ENCODE measurements at regions of chr3 and their contacts with region 1.

Region 1: DNA sequence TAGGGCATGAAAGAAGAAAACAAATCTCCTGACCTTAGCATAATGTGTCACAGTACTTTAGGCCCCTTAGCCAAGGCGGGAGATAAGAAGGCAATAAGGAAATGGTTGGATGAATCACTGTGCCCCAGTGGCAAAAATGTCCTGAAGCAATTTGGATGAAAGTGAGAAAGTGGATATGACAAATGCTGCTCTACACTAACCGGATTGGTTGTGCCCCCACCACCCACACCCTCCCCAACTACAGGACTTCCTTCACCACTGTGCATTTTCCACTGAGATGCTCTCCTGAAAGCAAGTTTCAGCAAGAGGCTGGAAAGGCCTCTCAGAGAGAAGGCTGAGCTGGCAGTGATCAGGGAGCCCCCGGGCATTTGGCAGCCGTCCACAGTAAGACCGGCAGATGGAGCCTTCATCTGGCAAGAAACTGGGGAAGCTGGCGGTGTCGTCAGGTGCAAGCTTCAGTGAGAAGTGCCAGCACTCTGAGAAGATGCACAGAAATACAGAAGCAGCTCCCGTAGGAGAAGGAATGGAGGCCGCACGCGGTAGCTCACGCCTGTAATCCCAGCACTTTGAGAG is 63.8 kb downstream of the ATP1B3 start:
- DNase-seq: no peak
- H3K4me3 Mint-ChIP-seq: peak overlapping the region; percentile 51
- H3K27ac Mint-ChIP-seq: peak overlapping the region; percentile 81
- H3K4me1 Mint-ChIP-seq: peaks cover 22% of the 10 kb centered on the region
- H3K27me3 Mint-ChIP-seq: no peaks in the 10 kb centered on the region

Region 2: DNA sequence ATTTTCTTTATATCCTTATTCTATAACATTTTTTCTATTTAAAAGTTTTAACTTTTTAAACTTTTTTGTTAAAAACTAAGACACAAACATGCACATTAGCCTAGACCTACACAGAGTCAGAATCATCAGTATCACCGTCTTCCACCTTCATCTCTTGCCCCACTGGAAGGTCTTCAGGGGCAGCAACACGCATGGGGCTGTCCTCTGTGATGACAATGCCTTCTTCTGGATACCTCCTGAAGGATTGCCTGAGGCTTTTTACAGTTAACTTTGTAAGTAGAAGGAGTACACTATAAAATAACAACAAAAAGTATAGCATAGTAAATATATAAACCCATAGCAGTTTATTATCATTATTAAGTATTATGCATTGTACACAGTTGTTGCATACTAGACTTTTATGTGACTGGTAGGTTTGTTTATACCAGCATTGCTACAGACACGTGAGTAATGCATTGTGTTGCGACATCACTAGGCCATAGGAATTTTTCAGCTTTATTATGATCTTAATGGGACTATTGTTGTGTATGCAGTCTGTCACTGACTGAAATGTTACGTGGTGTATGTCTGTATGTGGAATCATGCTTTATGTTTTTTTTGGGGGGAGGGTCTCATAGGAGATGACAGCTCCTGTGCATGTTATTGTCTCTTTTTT is 45.6 kb before region 1 on chr3:
- intact Hi-C with region 1: loop called (anchors 5 kb)
- DNase-seq: no peak
- H3K4me3 Mint-ChIP-seq: no peak overlapping the region
- H3K27ac Mint-ChIP-seq: peak overlapping the region; percentile 10
- H3K4me1 Mint-ChIP-seq: peaks cover 35% of the 10 kb centered on the region
- H3K27me3 Mint-ChIP-seq: no peaks in the 10 kb centered on the region

Region 3: DNA sequence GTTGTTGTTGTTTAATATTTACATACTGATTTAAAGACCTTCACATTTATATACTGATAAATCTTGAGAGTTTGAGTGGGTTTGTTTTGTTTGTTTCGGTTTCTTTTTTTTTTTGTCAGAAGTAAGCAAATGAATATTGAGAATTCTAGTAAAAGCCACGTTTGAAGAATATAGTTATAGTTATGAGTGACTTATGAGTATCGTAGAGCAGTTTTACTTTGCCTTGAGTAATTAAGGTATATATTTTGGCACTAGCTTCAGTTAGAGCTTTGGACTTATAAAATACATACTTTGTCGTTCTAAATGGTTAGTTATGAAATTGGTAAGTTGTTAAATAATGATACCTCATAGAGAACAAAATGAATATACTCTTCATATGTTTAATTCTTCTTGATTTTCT is 36.1 kb before region 1 on chr3:
- intact Hi-C with region 1: loop called (anchors 1 kb)
- DNase-seq: no peak
- H3K4me3 Mint-ChIP-seq: no peak overlapping the region
- H3K27ac Mint-ChIP-seq: peak overlapping the region; percentile 42
- H3K4me1 Mint-ChIP-seq: peaks cover 22% of the 10 kb centered on the region
- H3K27me3 Mint-ChIP-seq: no peaks in the 10 kb centered on the region

Region 4: DNA sequence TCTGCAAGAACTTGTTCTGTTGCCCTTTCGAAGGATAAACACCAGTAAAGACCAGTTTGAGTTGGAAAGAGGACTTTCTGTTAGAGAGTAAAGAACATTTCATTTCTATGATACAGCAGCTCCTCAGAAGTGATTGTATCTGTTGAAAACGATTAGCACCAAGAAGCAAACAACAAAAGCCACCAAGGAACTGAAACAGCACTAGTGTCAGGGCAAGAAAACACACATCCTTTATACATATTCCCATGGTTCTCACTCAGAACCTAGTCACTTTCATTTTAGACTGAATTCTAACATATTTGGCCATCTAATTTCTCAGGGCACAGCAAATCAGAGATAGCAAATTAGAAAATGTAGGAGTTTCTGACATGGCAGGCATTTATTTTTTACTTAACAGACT is 52.2 kb after region 1 on chr3:
- intact Hi-C with region 1: loop called (anchors 1 kb)
- DNase-seq: no peak
- H3K4me3 Mint-ChIP-seq: peak overlapping the region; percentile 9
- H3K27ac Mint-ChIP-seq: peak overlapping the region; percentile 63
- H3K4me1 Mint-ChIP-seq: peaks cover 11% of the 10 kb centered on the region
- H3K27me3 Mint-ChIP-seq: no peaks in the 10 kb centered on the region

Region 5: GRCh38 chr3:142022381-142022780 is 82.1 kb after region 1 on chr3:
- intact Hi-C with region 1: loop called (anchors 1 kb)
- DNase-seq: no peak
- H3K4me3 Mint-ChIP-seq: no peak overlapping the region
- H3K27ac Mint-ChIP-seq: peak overlapping the region; percentile 53
- H3K4me1 Mint-ChIP-seq: peaks cover 36% of the 10 kb centered on the region
- H3K27me3 Mint-ChIP-seq: no peaks in the 10 kb centered on the region

Region 6: GRCh38 chr3:142279965-142280590 is 339.8 kb after region 1 on chr3:
- intact Hi-C with region 1: loop called (anchors 2 kb)
- DNase-seq: peak; percentile 26
- H3K4me3 Mint-ChIP-seq: no peak overlapping the region
- H3K27ac Mint-ChIP-seq: peak overlapping the region; percentile 24
- H3K4me1 Mint-ChIP-seq: peaks cover 28% of the 10 kb centered on the region
- H3K27me3 Mint-ChIP-seq: no peaks in the 10 kb centered on the region

Measured in activated T-helper 2 cell treated with anti-CD3 and anti-CD28 coated beads, Interferon-gamma antibody, Interleukin-2, Interleukin-4, amounts not matched to agents 10 μg/mL and 5 μg/mL and 100 μg/mL, durations not matched to agents 14 hours and 24 hours and 36 hours (primary cell).